Heart left ventricle (tissue), 16 donors: ENCODE measurements at regions of chr10 and their contacts with region 1.

Region 1: GRCh38 chr10:50417886-50418830 is 166.8 kb upstream of the ASAH2 start:
- DNase-seq: peak; percentile 79 to 88 (median 85)
- ATAC-seq: peak; percentile 65 to 96 (median 91)
- H3K4me3 ChIP-seq: peak overlapping the region; percentile 50 to 88 (median 75)
- H3K27ac ChIP-seq: peak overlapping the region; percentile 54 to 91 (median 76)
- H3K4me1 ChIP-seq: peaks cover 0 to 86% (median 9%) of the 10 kb centered on the region in 12 donors
- H3K27me3 ChIP-seq: no peaks in the 10 kb centered on the region
- CTCF ChIP-seq: peak in 4 of 12 donors; percentile 15 to 40 (median 26)
- POLR2A ChIP-seq: peak in 1 of 2 donors; percentile 61

Region 2: GRCh38 chr10:50224330-50224952 is 193.7 kb before region 1 on chr10:
- intact Hi-C with region 1: no loop called
- DNase-seq: peak in 2 of 5 donors; percentile 6 to 27
- ATAC-seq: peak in 3 of 4 donors; percentile 60 to 61 (median 60)
- H3K4me3 ChIP-seq: no peak overlapping the region
- H3K27ac ChIP-seq: no peak overlapping the region
- H3K4me1 ChIP-seq: no peaks in the 10 kb centered on the region
- H3K27me3 ChIP-seq: peaks cover 0 to 6% (median 0%) of the 10 kb centered on the region in 9 donors
- CTCF ChIP-seq: peak in 11 of 12 donors; percentile 20 to 57 (median 43)
- POLR2A ChIP-seq: no peak

Region 3: GRCh38 chr10:50291261-50291850 is 126.8 kb before region 1 on chr10:
- intact Hi-C with region 1: loop called in 4 of 10 experiments (anchors 5 to 10 kb)
- DNase-seq: no peak
- ATAC-seq: peak in 3 of 4 donors; percentile 50 to 57 (median 52)
- H3K4me3 ChIP-seq: no peak overlapping the region
- H3K27ac ChIP-seq: no peak overlapping the region
- H3K4me1 ChIP-seq: peaks cover 0 to 10% (median 0%) of the 10 kb centered on the region in 12 donors
- H3K27me3 ChIP-seq: no peaks in the 10 kb centered on the region
- CTCF ChIP-seq: peak in 11 of 12 donors; percentile 14 to 61 (median 51)
- POLR2A ChIP-seq: no peak

Region 4: DNA sequence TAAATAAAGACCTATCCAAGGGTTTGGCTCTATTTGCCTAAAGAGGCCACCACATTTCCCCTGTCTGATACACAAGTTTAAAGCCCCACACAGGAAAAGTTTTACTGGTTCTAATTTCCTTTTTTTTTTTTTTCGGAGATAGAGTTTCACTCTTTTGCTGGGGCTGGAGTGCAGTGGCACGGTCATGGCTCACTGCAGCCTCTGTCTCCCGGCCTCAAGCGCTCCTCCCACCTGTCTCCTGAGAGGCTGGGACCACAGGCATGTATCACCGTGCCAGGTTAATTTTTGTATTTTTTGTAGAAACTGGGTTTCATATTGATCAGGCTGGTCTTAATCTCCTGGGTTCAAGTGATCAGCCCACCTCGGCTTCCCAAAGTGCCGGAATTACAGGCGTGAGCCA is 113.5 kb before region 1 on chr10:
- intact Hi-C with region 1: loop called in 3 of 10 experiments (anchors 5 to 10 kb)
- DNase-seq: no peak
- ATAC-seq: no peak
- H3K4me3 ChIP-seq: no peak overlapping the region
- H3K27ac ChIP-seq: no peak overlapping the region
- H3K4me1 ChIP-seq: no peaks in the 10 kb centered on the region
- H3K27me3 ChIP-seq: no peaks in the 10 kb centered on the region
- CTCF ChIP-seq: no peak
- POLR2A ChIP-seq: no peak

Region 5: DNA sequence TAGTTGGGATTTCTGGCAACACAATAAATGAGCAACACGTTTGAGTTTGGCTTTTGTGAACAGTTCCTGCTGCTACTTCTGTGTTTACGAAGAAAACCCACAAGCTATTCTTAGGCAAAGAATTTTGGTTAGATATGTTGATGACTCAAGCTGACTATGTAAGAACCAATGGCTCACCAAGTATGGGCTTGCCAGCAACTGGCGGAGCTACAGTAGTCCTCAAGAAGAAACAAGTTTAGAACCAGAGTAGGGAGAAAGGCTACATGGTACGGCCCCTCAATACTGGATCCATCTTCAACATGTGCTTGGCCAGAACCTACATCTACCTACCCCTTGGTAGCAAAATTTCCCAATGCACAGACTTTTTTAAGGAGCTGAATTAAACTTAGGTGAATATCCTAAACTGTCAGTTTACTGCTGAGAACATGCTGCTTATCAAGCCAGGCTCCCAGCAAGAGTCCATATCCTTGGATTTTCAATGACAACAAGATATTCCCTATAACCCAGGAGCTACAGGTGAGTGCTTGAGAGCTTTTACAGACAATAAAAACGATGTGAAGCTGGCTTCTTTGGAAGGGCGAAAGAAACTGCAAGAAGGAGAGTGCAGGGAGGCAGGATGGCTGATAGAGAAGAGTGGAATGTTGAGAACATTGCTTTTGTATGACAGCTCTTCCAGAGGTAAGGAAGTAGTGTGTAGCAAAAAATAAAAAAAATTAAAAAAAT is 92.5 kb before region 1 on chr10:
- intact Hi-C with region 1: loop called in 3 of 10 experiments (anchors 1 to 5 kb)
- DNase-seq: peak in 4 of 5 donors; percentile 23 to 79 (median 56)
- ATAC-seq: peak; percentile 66 to 92 (median 88)
- H3K4me3 ChIP-seq: peak overlapping the region in 8 of 12 donors; percentile 10 to 50 (median 34)
- H3K27ac ChIP-seq: peak overlapping the region in 11 of 12 donors; percentile 18 to 84 (median 69)
- H3K4me1 ChIP-seq: peaks cover 0 to 84% (median 41%) of the 10 kb centered on the region in 12 donors
- H3K27me3 ChIP-seq: no peaks in the 10 kb centered on the region
- CTCF ChIP-seq: no peak
- POLR2A ChIP-seq: peak in 1 of 2 donors; percentile 8

Region 6: DNA sequence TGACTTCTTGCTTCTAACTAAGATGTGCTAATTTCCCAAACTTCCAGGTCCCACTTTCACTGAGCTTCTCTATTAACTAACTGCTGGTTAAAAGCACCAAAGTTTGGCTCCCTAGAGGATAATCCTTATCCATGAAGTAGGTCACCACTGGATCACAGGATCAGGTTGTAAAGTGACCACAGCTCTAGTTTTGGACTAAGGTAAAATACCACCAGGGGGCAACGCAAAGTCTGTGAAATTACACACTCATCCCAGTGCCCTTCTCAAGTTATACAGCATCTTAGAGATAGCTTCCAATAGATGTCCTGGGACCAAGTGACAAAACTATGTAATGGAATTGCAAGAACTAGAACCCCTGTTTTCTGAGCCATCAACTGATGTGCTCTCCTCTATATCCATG is 50.4 kb before region 1 on chr10:
- intact Hi-C with region 1: loop called in 2 of 10 experiments (anchors 5 kb)
- DNase-seq: no peak
- ATAC-seq: peak in 1 of 4 donors; percentile 42
- H3K4me3 ChIP-seq: no peak overlapping the region
- H3K27ac ChIP-seq: no peak overlapping the region
- H3K4me1 ChIP-seq: peaks cover 0 to 18% (median 7%) of the 10 kb centered on the region in 12 donors
- H3K27me3 ChIP-seq: no peaks in the 10 kb centered on the region
- CTCF ChIP-seq: peak in 9 of 12 donors; percentile 10 to 43 (median 28)
- POLR2A ChIP-seq: no peak

Region 7: GRCh38 chr10:50373821-50374501 is 44.2 kb before region 1 on chr10:
- intact Hi-C with region 1: loop called in 2 of 10 experiments (anchors 5 kb)
- DNase-seq: no peak
- ATAC-seq: peak; percentile 29 to 67 (median 55)
- H3K4me3 ChIP-seq: no peak overlapping the region
- H3K27ac ChIP-seq: peak overlapping the region in 11 of 12 donors; percentile 1 to 75 (median 50)
- H3K4me1 ChIP-seq: peaks cover 0 to 29% (median 22%) of the 10 kb centered on the region in 12 donors
- H3K27me3 ChIP-seq: no peaks in the 10 kb centered on the region
- CTCF ChIP-seq: no peak
- POLR2A ChIP-seq: no peak

Region 8: GRCh38 chr10:50431791-50432190 is 13.6 kb after region 1 on chr10:
- intact Hi-C with region 1: loop called in 1 of 10 experiments (anchors 1 kb)
- DNase-seq: no peak
- ATAC-seq: peak in 1 of 4 donors; percentile 7
- H3K4me3 ChIP-seq: peak overlapping the region in 6 of 12 donors; percentile 8 to 31 (median 14)
- H3K27ac ChIP-seq: peak overlapping the region; percentile 18 to 86 (median 59)
- H3K4me1 ChIP-seq: peaks cover 0 to 31% (median 14%) of the 10 kb centered on the region in 12 donors
- H3K27me3 ChIP-seq: no peaks in the 10 kb centered on the region
- CTCF ChIP-seq: no peak
- POLR2A ChIP-seq: no peak